MCF 10A (cell line): ENCODE measurements at regions of chr1 and their contacts with region 1.

Region 1: GRCh38 chr1:228131766-228132165 is 8.3 kb upstream of the GUK1 start:
- DNase-seq: no peak
- H3K4me3 Mint-ChIP-seq: no peak overlapping the region
- H3K27ac Mint-ChIP-seq: no peak overlapping the region
- H3K4me1 Mint-ChIP-seq: peaks cover 10% of the 10 kb centered on the region
- H3K27me3 Mint-ChIP-seq: peaks cover 18% of the 10 kb centered on the region
- CTCF ChIP-seq: no peak

Region 2: GRCh38 chr1:228004331-228004855 is 127.4 kb before region 1 on chr1:
- CTCF ChIA-PET with region 1: interaction called, 55 read pairs
- POLR2A ChIA-PET with region 1: interaction called, 6 read pairs
- intact Hi-C with region 1: loop called (anchors 1 kb)
- DNase-seq: peak; percentile 82
- H3K4me3 Mint-ChIP-seq: no peak overlapping the region
- H3K27ac Mint-ChIP-seq: no peak overlapping the region
- H3K4me1 Mint-ChIP-seq: peaks cover 10% of the 10 kb centered on the region
- H3K27me3 Mint-ChIP-seq: peaks cover 37% of the 10 kb centered on the region
- CTCF ChIP-seq: peak; percentile 88

Region 3: GRCh38 chr1:228087771-228088251 is 44.0 kb before region 1 on chr1:
- CTCF ChIA-PET with region 1: interaction called, 15 read pairs
- POLR2A ChIA-PET with region 1: interaction called, 12 read pairs
- intact Hi-C with region 1: no loop called
- DNase-seq: peak; percentile 95
- H3K4me3 Mint-ChIP-seq: peak overlapping the region; percentile 77
- H3K27ac Mint-ChIP-seq: peak overlapping the region; percentile 78
- H3K4me1 Mint-ChIP-seq: peaks cover 82% of the 10 kb centered on the region
- H3K27me3 Mint-ChIP-seq: no peaks in the 10 kb centered on the region
- CTCF ChIP-seq: no peak

Region 4: DNA sequence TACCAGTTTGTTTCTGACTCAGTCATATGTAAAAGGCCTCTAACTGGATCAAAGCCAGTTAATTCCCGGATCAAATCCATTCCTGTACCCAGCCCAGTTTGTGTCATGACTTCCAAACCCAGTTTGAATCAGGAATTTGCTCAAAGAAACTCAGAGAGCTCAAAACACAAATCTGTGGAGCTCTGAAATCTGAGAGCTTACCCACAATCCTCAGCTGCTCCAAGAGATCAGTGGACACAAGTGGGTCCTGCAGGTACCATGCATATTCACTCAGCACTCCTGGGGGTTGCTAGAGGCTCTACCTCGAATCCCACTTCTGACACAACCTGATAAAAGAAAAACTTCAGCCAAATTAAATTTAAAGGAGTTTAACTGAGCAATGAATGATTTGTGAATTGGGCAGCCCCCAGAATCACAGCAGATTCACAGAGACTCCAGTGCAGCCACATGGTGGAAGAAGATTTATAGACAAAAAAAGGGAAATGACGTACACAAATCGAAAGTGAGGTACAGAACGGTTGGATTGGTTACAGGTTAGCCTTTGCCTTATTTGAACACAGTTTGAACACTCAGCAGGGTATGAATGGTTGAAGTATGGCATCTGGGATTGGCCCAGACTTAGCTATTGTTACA is 10.8 kb before region 1 on chr1:
- CTCF ChIA-PET with region 1: interaction called, 62 read pairs
- POLR2A ChIA-PET with region 1: interaction called, 42 read pairs
- intact Hi-C with region 1: no loop called
- DNase-seq: no peak
- H3K4me3 Mint-ChIP-seq: no peak overlapping the region
- H3K27ac Mint-ChIP-seq: no peak overlapping the region
- H3K4me1 Mint-ChIP-seq: no peaks in the 10 kb centered on the region
- H3K27me3 Mint-ChIP-seq: no peaks in the 10 kb centered on the region
- CTCF ChIP-seq: no peak

Region 5: GRCh38 chr1:228174482-228175375 is 43.0 kb after region 1 on chr1:
- CTCF ChIA-PET with region 1: interaction called, 10 read pairs
- POLR2A ChIA-PET with region 1: interaction called, 3 read pairs
- intact Hi-C with region 1: no loop called
- DNase-seq: no peak
- H3K4me3 Mint-ChIP-seq: no peak overlapping the region
- H3K27ac Mint-ChIP-seq: no peak overlapping the region
- H3K4me1 Mint-ChIP-seq: no peaks in the 10 kb centered on the region
- H3K27me3 Mint-ChIP-seq: no peaks in the 10 kb centered on the region
- CTCF ChIP-seq: no peak

Region 6: DNA sequence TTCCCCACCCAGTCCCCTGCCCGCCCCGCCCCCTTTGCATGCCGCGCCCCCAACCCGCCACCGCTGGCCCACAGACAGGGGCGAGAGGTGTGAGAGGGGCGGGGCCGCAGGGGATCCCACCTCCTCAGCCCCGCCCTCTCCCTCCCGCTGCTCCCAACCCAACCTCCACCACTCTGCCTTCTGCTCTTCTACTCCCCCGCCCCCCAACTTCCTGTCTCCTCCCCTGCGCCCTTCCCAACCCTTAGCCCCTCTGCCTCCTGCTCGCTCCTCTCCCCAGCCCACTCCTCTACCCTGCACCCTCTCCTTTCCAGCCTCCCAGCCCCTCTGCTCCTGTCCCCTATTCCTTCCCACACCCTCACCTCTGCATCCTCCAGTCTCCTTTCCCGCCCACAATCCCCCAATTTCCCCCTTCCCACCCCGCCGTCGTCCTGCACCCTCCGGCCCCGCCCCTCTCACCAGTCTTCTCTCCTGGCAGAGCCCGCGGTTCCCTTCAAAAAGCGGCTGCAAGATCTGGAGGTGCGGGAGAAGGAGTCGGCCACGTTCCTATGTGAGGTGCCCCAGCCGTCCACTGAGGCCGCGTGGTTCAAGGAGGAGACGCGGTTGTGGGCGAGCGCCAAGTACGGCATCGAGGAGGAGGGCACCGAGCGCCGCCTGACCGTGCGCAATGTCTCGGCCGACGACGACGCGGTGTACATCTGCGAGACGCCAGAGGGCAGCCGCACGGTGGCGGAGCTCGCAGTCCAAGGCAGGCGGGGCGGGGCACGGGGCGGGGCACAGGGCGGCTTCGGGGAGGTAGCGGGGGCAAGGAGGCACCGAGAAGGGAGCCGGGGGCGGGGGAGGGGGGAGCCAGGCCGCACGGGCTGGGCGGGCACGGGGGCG is 81.4 kb after region 1 on chr1:
- CTCF ChIA-PET with region 1: interaction called, 15 read pairs
- POLR2A ChIA-PET with region 1: no interaction called
- intact Hi-C with region 1: loop called (anchors 1 kb)
- DNase-seq: peak; percentile 92
- H3K4me3 Mint-ChIP-seq: peak overlapping the region; percentile 88
- H3K27ac Mint-ChIP-seq: peak overlapping the region; percentile 74
- H3K4me1 Mint-ChIP-seq: peaks cover 8% of the 10 kb centered on the region
- H3K27me3 Mint-ChIP-seq: no peaks in the 10 kb centered on the region
- CTCF ChIP-seq: peak; percentile 69

Region 7: GRCh38 chr1:228393248-228393699 is 261.5 kb after region 1 on chr1:
- CTCF ChIA-PET with region 1: no interaction called
- POLR2A ChIA-PET with region 1: no interaction called
- intact Hi-C with region 1: loop called (anchors 1 kb)
- DNase-seq: peak; percentile 82
- H3K4me3 Mint-ChIP-seq: no peak overlapping the region
- H3K27ac Mint-ChIP-seq: peak overlapping the region; percentile 75
- H3K4me1 Mint-ChIP-seq: peaks cover 17% of the 10 kb centered on the region
- H3K27me3 Mint-ChIP-seq: no peaks in the 10 kb centered on the region
- CTCF ChIP-seq: peak; percentile 64